ENCODE measurements at regions of chr17 and their contacts with region 1.

Region 1: GRCh38 chr17:3913531-3914311 is 2.5 kb downstream of the P2RX1 start:
- DNase-seq: peak; percentile 59 to 88 (median 78)
- ATAC-seq: peak; percentile 31 to 60
- H3K4me3 Mint-ChIP-seq: peak overlapping the region in 5 of 10 donors; percentile 0 to 85 (median 27)
- H3K27ac Mint-ChIP-seq: peak overlapping the region; percentile 53 to 91 (median 80)
- H3K4me1 Mint-ChIP-seq: peaks cover 29 to 72% (median 68%) of the 10 kb centered on the region in 4 donors
- H3K27me3 Mint-ChIP-seq: no peaks in the 10 kb centered on the region

Region 2: GRCh38 chr17:3940965-3941698 is 27.4 kb after region 1 on chr17:
- POLR2A ChIA-PET with region 1: no interaction called
- DNase-seq: no peak
- ATAC-seq: no peak
- H3K4me3 Mint-ChIP-seq: no peak overlapping the region
- H3K27ac Mint-ChIP-seq: peak overlapping the region in 1 of 10 donors; percentile 56
- H3K4me1 Mint-ChIP-seq: peaks cover 0 to 14% (median 12%) of the 10 kb centered on the region in 4 donors
- H3K27me3 Mint-ChIP-seq: no peaks in the 10 kb centered on the region

Region 3: GRCh38 chr17:3965118-3965803 is 51.5 kb after region 1 on chr17:
- POLR2A ChIA-PET with region 1: interaction called, 20 read pairs
- DNase-seq: peak; percentile 42 to 80 (median 62)
- ATAC-seq: peak; percentile 56 to 65
- H3K4me3 Mint-ChIP-seq: peak overlapping the region; percentile 82 to 96 (median 93)
- H3K27ac Mint-ChIP-seq: peak overlapping the region; percentile 79 to 98 (median 95)
- H3K4me1 Mint-ChIP-seq: peaks cover 28 to 60% (median 46%) of the 10 kb centered on the region in 4 donors
- H3K27me3 Mint-ChIP-seq: no peaks in the 10 kb centered on the region

Measured in naive thymus-derived CD8-positive, alpha-beta T cell (primary cell).